ENCODE measurements at regions of chr4 and their contacts with region 1.

Region 1: DNA sequence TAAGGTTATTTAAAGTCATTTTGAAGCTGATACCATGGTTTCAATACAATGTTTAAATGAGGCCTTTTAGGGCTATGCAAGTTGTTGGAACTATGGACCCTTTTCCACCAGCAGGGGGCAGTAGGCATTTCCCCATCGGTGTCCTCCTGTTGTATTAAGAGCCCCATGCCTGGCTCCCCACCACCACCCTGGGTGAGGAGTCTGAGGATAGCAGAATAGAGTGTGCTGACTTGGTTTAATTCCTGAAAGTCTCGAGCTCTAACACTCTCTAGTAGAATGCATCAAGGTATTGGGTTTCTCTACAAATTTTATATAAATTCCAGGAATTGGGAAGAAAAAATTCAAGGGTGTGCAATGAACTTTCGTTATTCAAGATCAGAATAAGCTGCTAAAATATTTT is 234.8 kb upstream of the JADE1 start:
- DNase-seq: peak; percentile 81
- H3K4me3 Mint-ChIP-seq: peak overlapping the region; percentile 56
- H3K27ac Mint-ChIP-seq: peak overlapping the region; percentile 78
- H3K4me1 Mint-ChIP-seq: peaks cover 29% of the 10 kb centered on the region
- H3K27me3 Mint-ChIP-seq: no peaks in the 10 kb centered on the region
- CTCF ChIP-seq: peak; percentile 64

Region 2: GRCh38 chr4:128454281-128455075 is 120.2 kb before region 1 on chr4:
- CTCF ChIA-PET with region 1: interaction called, 6 read pairs
- intact Hi-C with region 1: loop called (anchors 2 kb)
- DNase-seq: peak; percentile 68
- H3K4me3 Mint-ChIP-seq: no peak overlapping the region
- H3K27ac Mint-ChIP-seq: no peak overlapping the region
- H3K4me1 Mint-ChIP-seq: no peaks in the 10 kb centered on the region
- H3K27me3 Mint-ChIP-seq: no peaks in the 10 kb centered on the region
- CTCF ChIP-seq: peak; percentile 62

Region 3: GRCh38 chr4:128528793-128529553 is 45.7 kb before region 1 on chr4:
- CTCF ChIA-PET with region 1: no interaction called
- intact Hi-C with region 1: loop called (anchors 5 kb)
- DNase-seq: peak; percentile 55
- H3K4me3 Mint-ChIP-seq: peak overlapping the region; percentile 38
- H3K27ac Mint-ChIP-seq: peak overlapping the region; percentile 71
- H3K4me1 Mint-ChIP-seq: peaks cover 25% of the 10 kb centered on the region
- H3K27me3 Mint-ChIP-seq: no peaks in the 10 kb centered on the region
- CTCF ChIP-seq: no peak

Region 4: DNA sequence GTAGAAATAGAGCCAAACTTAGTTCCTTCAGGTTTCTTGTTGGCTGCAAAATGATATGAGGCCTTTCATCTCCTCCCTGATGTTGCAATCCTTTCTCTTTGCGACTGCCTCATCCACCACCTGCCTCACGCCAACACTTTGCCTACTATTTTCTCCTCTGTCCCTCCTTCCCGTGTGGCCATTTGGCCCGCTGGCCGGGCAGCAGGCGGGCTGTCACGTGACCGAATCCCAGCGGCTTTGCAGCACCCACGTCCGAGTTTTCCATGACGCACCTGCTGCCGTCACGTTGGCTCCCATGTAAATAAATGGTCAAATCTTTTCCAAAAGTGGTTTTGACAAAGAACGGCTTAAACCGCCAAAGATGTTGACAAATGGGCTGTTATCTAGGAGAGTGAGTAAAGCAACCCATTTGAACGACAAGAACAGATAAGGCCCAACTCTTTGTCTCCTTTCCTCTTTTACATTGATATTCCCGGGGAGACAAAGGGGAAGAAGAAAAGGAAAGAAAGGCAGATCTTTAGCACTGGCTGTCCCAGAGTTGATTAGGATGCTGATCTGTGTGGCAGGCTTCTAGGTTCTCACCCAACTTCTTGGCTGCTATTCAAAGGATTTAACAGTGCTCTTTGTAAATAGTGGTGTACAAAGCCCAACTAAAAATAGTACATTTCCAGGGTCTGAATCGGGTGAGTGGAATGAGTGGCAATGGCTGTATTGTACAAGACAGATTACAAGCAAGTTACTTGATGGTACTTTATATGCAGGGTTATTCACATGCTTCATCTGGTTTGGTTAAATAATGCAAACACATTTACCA is 60.6 kb after region 1 on chr4:
- CTCF ChIA-PET with region 1: no interaction called
- intact Hi-C with region 1: loop called (anchors 5 kb)
- DNase-seq: peak; percentile 66
- H3K4me3 Mint-ChIP-seq: peak overlapping the region; percentile 51
- H3K27ac Mint-ChIP-seq: peak overlapping the region; percentile 85
- H3K4me1 Mint-ChIP-seq: peaks cover 20% of the 10 kb centered on the region
- H3K27me3 Mint-ChIP-seq: no peaks in the 10 kb centered on the region
- CTCF ChIP-seq: no peak

Region 5: DNA sequence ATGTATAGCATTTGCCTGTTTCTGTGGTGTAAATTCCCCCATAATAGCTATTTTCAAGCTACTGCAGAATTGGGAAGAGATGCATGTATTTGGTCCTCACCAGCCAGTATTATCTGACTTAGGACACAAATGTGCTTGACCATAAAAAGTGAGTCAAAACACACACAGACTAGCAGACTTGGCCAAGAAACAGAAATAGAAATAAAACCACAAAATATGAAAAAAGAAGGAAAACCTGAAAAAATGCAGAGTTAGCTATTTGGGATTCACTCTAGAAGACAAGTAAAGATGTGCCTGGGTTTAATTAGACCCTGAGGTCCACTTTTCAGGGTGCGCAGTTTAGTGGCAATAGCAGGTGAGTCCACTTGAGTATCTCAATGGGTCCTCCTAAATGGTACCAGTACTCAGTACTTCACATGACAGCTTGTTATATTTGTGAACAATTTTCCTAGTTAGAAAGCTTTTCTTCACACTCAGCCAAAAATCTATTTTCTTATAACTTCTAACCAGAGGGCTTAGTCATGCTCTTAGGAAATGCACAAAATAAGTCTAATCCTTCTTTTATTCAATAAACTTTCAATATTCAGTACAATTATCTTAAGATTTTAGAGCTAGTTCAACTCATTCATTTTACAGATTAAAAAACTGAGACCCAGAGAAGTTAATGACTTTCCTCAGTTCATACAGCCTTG is 126.1 kb after region 1 on chr4:
- CTCF ChIA-PET with region 1: no interaction called
- intact Hi-C with region 1: loop called (anchors 5 kb)
- DNase-seq: no peak
- H3K4me3 Mint-ChIP-seq: no peak overlapping the region
- H3K27ac Mint-ChIP-seq: no peak overlapping the region
- H3K4me1 Mint-ChIP-seq: peaks cover 8% of the 10 kb centered on the region
- H3K27me3 Mint-ChIP-seq: no peaks in the 10 kb centered on the region
- CTCF ChIP-seq: no peak

Region 6: DNA sequence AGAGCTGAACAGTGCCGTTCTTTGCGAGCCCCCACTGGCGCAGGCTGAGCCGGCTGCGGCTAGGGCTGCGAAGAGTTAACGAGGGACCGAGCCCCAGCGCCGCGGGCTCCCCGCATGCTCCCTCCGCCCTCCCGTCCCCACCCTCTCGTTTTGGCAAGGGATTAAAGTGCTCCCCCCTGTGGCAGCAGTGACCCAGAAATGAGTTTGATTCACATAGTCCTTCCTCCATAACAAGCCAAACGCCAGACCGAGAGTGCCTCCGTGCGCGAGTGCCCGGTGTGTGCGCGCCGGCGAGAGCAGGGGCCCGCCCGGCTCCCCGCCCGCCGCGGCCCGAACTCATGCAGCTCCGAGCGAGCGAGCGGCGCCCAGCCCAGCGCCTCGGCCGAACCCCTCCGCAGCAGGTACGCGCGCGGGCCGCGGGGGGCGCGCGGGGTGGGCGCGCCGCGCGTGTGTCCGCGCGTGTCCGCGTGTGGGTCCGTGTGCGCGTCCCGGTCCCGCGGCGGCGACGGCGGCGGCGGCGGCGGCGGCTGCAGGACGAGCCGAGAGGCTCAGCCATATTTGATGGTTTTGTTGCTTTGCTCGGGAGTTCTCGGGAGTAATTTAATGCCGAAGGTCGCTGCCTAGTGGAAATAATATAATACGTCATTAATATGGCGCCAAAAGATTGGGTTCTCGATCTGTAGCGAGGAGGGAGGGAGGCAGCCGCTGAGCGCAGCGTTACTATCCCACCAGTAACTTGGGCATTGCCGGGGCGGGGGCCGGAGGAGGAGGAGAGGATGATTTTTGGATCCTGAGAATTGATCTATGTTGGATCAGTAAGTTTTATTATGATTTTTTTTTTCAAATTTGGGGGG is 235.0 kb after region 1 on chr4 and contains the start of gene JADE1:
- CTCF ChIA-PET with region 1: interaction called, 8 read pairs
- intact Hi-C with region 1: loop called (anchors 1 kb)
- DNase-seq: peak; percentile 87
- H3K4me3 Mint-ChIP-seq: peak within 1 kb of the TSS; percentile 81
- H3K27ac Mint-ChIP-seq: peak within 1 kb of the TSS; percentile 92
- H3K4me1 Mint-ChIP-seq: peaks cover 8% of the 10 kb centered on the region
- H3K27me3 Mint-ChIP-seq: no peaks in the 10 kb centered on the region
- CTCF ChIP-seq: no peak
- total RNA-seq, gene JADE1: 29.9 and 33.9 TPM in 2 replicates

Region 7: GRCh38 chr4:128863312-128864075 is 288.8 kb after region 1 on chr4:
- CTCF ChIA-PET with region 1: no interaction called
- intact Hi-C with region 1: loop called (anchors 2 kb)
- DNase-seq: peak; percentile 74
- H3K4me3 Mint-ChIP-seq: no peak overlapping the region
- H3K27ac Mint-ChIP-seq: no peak overlapping the region
- H3K4me1 Mint-ChIP-seq: no peaks in the 10 kb centered on the region
- H3K27me3 Mint-ChIP-seq: no peaks in the 10 kb centered on the region
- CTCF ChIP-seq: peak; percentile 63

Measured in Calu3 (cell line).